ENCODE measurements at regions of chr1 and their contacts with region 1.

Region 1: GRCh38 chr1:30779294-30780071 is 21.9 kb upstream of the LAPTM5 start:
- DNase-seq: peak; percentile 74 to 81 (median 77)
- H3K4me3 ChIP-seq: no peak overlapping the region
- H3K4me3 Mint-ChIP-seq: peak overlapping the region in 1 of 2 donors; percentile 57
- H3K27ac ChIP-seq: no peak overlapping the region
- H3K27ac Mint-ChIP-seq: peak overlapping the region in 5 of 7 donors; percentile 15 to 76 (median 50)
- H3K4me1 ChIP-seq: peaks cover 44 to 53% of the 10 kb centered on the region in 2 donors
- H3K4me1 Mint-ChIP-seq: peaks cover 55% of the 10 kb centered on the region
- H3K27me3 ChIP-seq: peaks cover 0 to 8% of the 10 kb centered on the region in 2 donors
- H3K27me3 Mint-ChIP-seq: peaks cover 3 to 7% (median 6%) of the 10 kb centered on the region in 3 donors
- CTCF ChIP-seq: peak; percentile 98

Region 2: GRCh38 chr1:30718636-30719405 is 60.7 kb before region 1 on chr1:
- intact Hi-C with region 1: loop called (anchors 2 to 5 kb)
- DNase-seq: peak; percentile 97 to 99 (median 98)
- H3K4me3 ChIP-seq: peak overlapping the region; percentile 0 to 69 (median 49)
- H3K4me3 Mint-ChIP-seq: peak overlapping the region; percentile 39 to 58
- H3K27ac ChIP-seq: peak overlapping the region; percentile 95 to 97
- H3K27ac Mint-ChIP-seq: peak overlapping the region; percentile 87 to 97 (median 93)
- H3K4me1 ChIP-seq: peaks cover 27 to 33% of the 10 kb centered on the region in 2 donors
- H3K4me1 Mint-ChIP-seq: peaks cover 24% of the 10 kb centered on the region
- H3K27me3 ChIP-seq: no peaks in the 10 kb centered on the region
- H3K27me3 Mint-ChIP-seq: peaks cover 0 to 3% (median 2%) of the 10 kb centered on the region in 3 donors
- CTCF ChIP-seq: peak; percentile 100

Region 3: DNA sequence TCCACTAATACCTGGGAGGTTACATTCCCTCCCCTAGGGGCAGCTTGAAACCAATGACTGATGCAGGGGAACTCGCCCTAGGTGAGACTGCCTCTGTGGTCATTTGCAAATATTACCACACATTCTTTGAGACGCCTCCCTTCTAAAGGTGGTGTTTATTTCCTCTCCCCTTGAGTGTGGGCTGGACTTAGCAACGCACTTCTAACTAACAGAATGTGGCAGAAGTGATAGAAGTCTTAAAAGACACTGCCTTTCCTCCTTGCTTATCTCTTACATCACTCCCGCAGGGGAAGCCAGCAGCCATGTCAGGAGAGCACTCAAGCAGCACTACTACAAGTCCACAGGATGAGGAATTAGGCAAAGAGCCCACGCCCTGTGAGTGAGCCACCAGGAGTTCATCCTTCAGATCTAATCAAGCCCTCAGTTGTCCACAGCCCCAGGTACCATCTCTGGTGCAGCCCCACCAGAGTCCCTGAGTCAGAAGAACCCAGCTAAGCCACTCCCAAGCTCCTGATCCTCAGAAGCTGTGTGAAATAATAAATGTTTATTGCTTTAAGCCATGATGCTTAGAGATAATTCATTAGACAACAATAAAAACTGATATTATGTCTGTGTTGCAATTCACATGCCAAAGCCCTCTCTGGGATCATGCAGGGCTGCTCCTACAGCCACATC is 41.3 kb before region 1 on chr1:
- intact Hi-C with region 1: loop called (anchors 5 kb)
- DNase-seq: no peak
- H3K4me3 ChIP-seq: no peak overlapping the region
- H3K4me3 Mint-ChIP-seq: no peak overlapping the region
- H3K27ac ChIP-seq: peak overlapping the region in 1 of 2 donors; percentile 17
- H3K27ac Mint-ChIP-seq: peak overlapping the region; percentile 43 to 88 (median 74)
- H3K4me1 ChIP-seq: peaks cover 27 to 28% of the 10 kb centered on the region in 2 donors
- H3K4me1 Mint-ChIP-seq: peaks cover 46% of the 10 kb centered on the region
- H3K27me3 ChIP-seq: no peaks in the 10 kb centered on the region
- H3K27me3 Mint-ChIP-seq: peaks cover 0 to 5% (median 1%) of the 10 kb centered on the region in 3 donors
- CTCF ChIP-seq: no peak

Region 4: GRCh38 chr1:30743584-30744059 is 35.9 kb before region 1 on chr1:
- intact Hi-C with region 1: loop called (anchors 5 kb)
- DNase-seq: peak in 2 of 3 donors; percentile 37 to 64
- H3K4me3 ChIP-seq: peak overlapping the region in 1 of 3 experiments; percentile 2
- H3K4me3 Mint-ChIP-seq: peak overlapping the region in 1 of 2 donors; percentile 14
- H3K27ac ChIP-seq: peak overlapping the region; percentile 35 to 77
- H3K27ac Mint-ChIP-seq: peak overlapping the region; percentile 68 to 100 (median 84)
- H3K4me1 ChIP-seq: peaks cover 82% of the 10 kb centered on the region in 2 donors
- H3K4me1 Mint-ChIP-seq: peaks cover 90% of the 10 kb centered on the region
- H3K27me3 ChIP-seq: no peaks in the 10 kb centered on the region
- H3K27me3 Mint-ChIP-seq: peaks cover 0 to 3% (median 2%) of the 10 kb centered on the region in 3 donors
- CTCF ChIP-seq: no peak

Region 5: GRCh38 chr1:30756545-30757195 is 22.8 kb before region 1 on chr1:
- intact Hi-C with region 1: loop called in 1 of 2 experiments (anchors 2 kb)
- DNase-seq: peak; percentile 99 to 100 (median 100)
- H3K4me3 ChIP-seq: peak overlapping the region; percentile 86 to 96 (median 96)
- H3K4me3 Mint-ChIP-seq: peak overlapping the region; percentile 92 to 97
- H3K27ac ChIP-seq: peak overlapping the region; percentile 97 to 100
- H3K27ac Mint-ChIP-seq: peak overlapping the region; percentile 99 to 100 (median 100)
- H3K4me1 ChIP-seq: peaks cover 84 to 87% of the 10 kb centered on the region in 2 donors
- H3K4me1 Mint-ChIP-seq: peaks cover 66% of the 10 kb centered on the region
- H3K27me3 ChIP-seq: no peaks in the 10 kb centered on the region
- H3K27me3 Mint-ChIP-seq: peaks cover 0 to 3% (median 0%) of the 10 kb centered on the region in 3 donors
- CTCF ChIP-seq: no peak

Region 6: GRCh38 chr1:30816211-30817076 is 37.0 kb after region 1 on chr1:
- intact Hi-C with region 1: no loop called
- DNase-seq: no peak
- H3K4me3 ChIP-seq: no peak overlapping the region
- H3K4me3 Mint-ChIP-seq: peak overlapping the region in 1 of 2 donors; percentile 46
- H3K27ac ChIP-seq: no peak overlapping the region
- H3K27ac Mint-ChIP-seq: no peak overlapping the region
- H3K4me1 ChIP-seq: no peaks in the 10 kb centered on the region
- H3K4me1 Mint-ChIP-seq: no peaks in the 10 kb centered on the region
- H3K27me3 ChIP-seq: peaks cover 36 to 85% of the 10 kb centered on the region in 2 donors
- H3K27me3 Mint-ChIP-seq: peaks cover 30 to 61% (median 36%) of the 10 kb centered on the region in 3 donors
- CTCF ChIP-seq: no peak

Region 7: DNA sequence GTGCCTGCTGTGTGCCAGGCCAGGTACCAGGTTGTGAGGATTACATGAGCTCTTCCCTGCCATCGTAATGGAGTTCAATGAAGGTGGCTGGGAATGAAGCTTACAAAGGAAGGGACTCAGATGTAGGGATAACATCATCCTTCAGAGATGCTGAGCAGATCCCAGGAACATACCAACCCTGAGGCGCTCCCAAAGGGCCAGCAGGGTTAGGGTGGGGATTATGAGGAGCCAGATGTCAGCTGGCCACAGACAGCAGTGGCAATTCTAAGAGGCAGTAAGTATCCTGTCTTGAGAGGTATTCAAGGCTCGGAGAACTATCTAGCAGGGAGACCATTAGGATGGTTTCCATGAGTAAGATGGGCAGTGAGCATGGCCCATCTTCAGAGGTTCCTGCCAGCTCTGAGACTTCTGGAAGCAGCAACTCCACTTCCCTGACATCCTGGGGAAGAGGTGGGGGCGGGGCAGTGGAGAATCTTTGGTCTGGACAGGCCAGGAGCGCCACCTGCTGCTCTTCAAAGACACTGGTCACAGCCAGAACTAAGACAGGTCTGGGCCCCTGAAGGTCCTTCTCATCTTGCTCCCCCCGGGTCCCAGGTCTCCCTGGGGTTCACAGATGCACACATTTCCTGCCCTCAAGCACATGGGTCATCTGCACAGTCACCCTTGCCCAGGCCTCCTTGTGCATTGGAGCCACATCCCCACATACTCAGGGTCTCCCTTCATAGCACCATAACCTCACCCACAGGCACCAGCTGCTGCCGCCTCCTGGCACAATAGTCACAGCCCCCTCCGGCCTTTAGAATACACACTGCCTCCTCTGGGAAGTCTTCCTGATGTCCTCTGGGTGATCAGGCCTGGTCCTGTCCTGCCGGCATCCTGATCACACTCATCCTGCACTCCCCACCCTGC is 131.8 kb after region 1 on chr1:
- intact Hi-C with region 1: loop called (anchors 5 kb)
- DNase-seq: peak; percentile 60 to 76 (median 72)
- H3K4me3 ChIP-seq: peak overlapping the region in 1 of 3 experiments; percentile 18
- H3K4me3 Mint-ChIP-seq: peak overlapping the region in 1 of 2 donors; percentile 60
- H3K27ac ChIP-seq: no peak overlapping the region
- H3K27ac Mint-ChIP-seq: peak overlapping the region in 3 of 7 donors; percentile 26 to 56 (median 31)
- H3K4me1 ChIP-seq: peaks cover 68% of the 10 kb centered on the region in 2 donors
- H3K4me1 Mint-ChIP-seq: peaks cover 67% of the 10 kb centered on the region
- H3K27me3 ChIP-seq: peaks cover 14 to 28% of the 10 kb centered on the region in 2 donors
- H3K27me3 Mint-ChIP-seq: peaks cover 30 to 37% (median 31%) of the 10 kb centered on the region in 3 donors
- CTCF ChIP-seq: peak; percentile 82

Region 8: GRCh38 chr1:30929135-30929889 is 149.8 kb after region 1 on chr1:
- intact Hi-C with region 1: loop called in 1 of 2 experiments (anchors 5 kb)
- DNase-seq: peak; percentile 42 to 59 (median 54)
- H3K4me3 ChIP-seq: no peak overlapping the region
- H3K4me3 Mint-ChIP-seq: no peak overlapping the region
- H3K27ac ChIP-seq: no peak overlapping the region
- H3K27ac Mint-ChIP-seq: peak overlapping the region in 2 of 7 donors; percentile 26 to 30
- H3K4me1 ChIP-seq: peaks cover 6 to 8% of the 10 kb centered on the region in 2 donors
- H3K4me1 Mint-ChIP-seq: peaks cover 8% of the 10 kb centered on the region
- H3K27me3 ChIP-seq: no peaks in the 10 kb centered on the region
- H3K27me3 Mint-ChIP-seq: peaks cover 2 to 4% (median 3%) of the 10 kb centered on the region in 3 donors
- CTCF ChIP-seq: peak; percentile 91

Measured in CD14-positive monocyte (primary cell).